H1 (cell line): ENCODE measurements at regions of chr6 and their contacts with region 1.

Region 1: DNA sequence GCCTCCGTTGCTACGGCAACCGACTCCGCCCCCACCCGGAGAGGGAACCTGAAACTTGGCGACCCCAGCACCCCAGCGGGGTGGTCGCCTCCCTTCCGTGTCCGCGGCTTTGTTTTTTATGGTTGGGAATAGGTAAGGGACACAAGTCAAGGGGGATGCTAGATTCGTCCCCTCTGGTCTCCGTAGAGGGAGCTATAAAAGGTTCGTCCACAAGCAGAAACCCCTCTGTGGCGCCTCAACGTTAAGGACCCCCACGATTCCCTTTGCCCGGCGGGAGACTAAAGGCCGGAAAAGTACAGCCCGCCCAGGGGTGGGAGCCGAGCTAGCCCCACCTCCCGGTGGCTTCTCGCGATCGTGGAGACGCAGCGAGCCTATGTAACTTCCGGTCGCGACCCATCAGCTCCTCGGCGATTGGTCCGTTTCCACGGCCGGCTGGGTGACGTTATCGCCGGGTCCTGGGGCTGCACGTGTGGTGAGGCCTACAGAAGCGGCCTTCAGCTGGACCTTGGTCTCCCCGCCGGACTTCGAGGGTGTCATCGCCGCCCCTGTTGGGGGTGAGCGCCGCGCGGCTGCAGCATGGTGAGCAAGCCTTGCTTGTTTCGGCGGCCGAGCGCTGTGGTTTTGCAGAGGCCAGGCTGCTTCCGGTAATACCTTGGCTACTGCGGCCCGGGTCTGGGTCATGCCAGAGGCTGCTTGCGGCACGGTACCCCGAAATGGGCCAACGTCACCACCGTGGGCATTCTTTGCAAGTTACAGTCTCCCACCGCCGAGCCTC is at the start of gene LTV1:
- DNase-seq: peak; percentile 88 to 96
- H3K4me3 ChIP-seq: peak within 1 kb of the TSS; percentile 80 to 97 (median 96)
- H3K27ac ChIP-seq: peak within 1 kb of the TSS; percentile 87
- H3K4me1 ChIP-seq: 0 out of 7 replicates have a peak, but pooled peaks cover 0 to 2% (median 0%) of the 10 kb centered on the region in 4 experiments
- H3K27me3 ChIP-seq: no peaks in the 10 kb centered on the region; a peak in 1 of 7 replicates
- CTCF ChIP-seq: no peak
- EP300 ChIP-seq: no peak; a peak in 1 of 3 replicates
- POLR2A ChIP-seq: peak in 1 of 2 experiments; percentile 90; a peak in 2 of 3 replicates
- RAD21 ChIP-seq: no peak; a peak in 1 of 4 replicates
- total RNA-seq, gene LTV1: 43.1 and 46.9 TPM in 2 replicates

Region 2: DNA sequence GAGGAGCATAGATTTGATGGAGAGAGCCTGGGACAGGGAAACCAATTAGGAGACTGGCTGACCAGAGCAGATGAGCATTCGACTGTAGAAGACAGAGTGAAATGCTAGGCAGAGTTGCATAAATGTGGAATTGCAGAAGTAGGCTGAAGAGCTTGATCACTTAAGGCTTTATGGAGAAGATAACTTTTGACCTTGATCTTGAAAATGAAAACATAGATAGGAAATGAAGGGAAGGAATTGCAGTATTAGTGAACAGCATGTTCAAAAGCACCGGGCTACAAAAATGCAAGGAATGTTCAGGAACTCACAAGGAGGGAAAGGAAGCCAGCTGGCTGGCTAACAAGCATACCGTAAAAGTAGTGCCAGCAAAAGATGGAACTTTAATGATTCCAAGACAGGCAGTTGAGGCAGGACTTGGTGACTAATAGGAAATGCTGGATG is 20.5 kb before region 1 on chr6:
- CTCF ChIA-PET with region 1: interaction called, 3 read pairs
- POLR2A ChIA-PET with region 1: interaction called, 12 read pairs
- DNase-seq: no peak
- H3K4me3 ChIP-seq: no peak overlapping the region
- H3K27ac ChIP-seq: no peak overlapping the region
- H3K4me1 ChIP-seq: no peaks in the 10 kb centered on the region
- H3K27me3 ChIP-seq: no peaks in the 10 kb centered on the region
- CTCF ChIP-seq: no peak
- EP300 ChIP-seq: no peak
- POLR2A ChIP-seq: no peak
- RAD21 ChIP-seq: no peak

Region 3: DNA sequence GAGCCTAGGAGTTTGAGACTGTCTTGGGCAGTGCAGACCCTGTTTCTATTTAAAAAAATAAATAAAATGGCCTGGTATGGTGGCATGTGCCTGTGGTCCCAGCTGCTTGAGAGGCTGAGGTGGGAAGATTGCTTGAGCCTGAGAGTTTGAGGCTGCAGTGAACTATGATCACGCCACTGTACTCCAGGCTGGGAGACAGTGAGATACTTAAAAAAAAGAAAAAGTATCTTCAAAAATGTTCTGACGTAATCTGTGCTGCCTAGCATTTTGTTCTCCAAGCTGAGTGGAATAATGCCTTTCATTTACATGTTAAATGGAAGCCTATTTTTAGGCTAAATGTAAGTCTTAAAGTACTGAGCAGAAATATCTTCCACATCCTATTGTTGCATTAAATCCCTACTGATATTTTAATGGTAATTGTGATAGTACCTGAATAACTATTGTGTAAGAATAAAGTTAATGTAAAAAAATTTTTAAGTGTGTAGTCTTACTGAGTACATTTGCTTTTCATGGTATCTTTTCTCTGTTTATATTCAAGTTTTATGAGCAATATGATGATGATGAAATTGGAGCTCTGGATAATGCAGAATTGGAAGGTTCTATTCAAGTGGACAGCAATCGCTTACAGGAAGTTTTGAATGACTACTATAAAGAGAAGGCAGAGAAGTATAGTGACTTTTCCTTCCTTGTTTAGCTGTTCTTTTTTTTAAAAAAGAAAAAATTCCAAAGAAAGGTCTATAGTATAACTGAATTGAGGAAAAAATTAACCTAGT is 17.0 kb after region 1 on chr6:
- CTCF ChIA-PET with region 1: interaction called, 5 read pairs
- POLR2A ChIA-PET with region 1: interaction called, 20 read pairs
- DNase-seq: no peak
- H3K4me3 ChIP-seq: no peak overlapping the region
- H3K27ac ChIP-seq: no peak overlapping the region
- H3K4me1 ChIP-seq: no peaks in the 10 kb centered on the region
- H3K27me3 ChIP-seq: no peaks in the 10 kb centered on the region
- CTCF ChIP-seq: no peak
- EP300 ChIP-seq: no peak
- POLR2A ChIP-seq: no peak
- RAD21 ChIP-seq: no peak

Region 4: GRCh38 chr6:143965503-143966171 is 122.5 kb after region 1 on chr6:
- CTCF ChIA-PET with region 1: no interaction called
- POLR2A ChIA-PET with region 1: no interaction called
- DNase-seq: no peak
- H3K4me3 ChIP-seq: no peak overlapping the region
- H3K27ac ChIP-seq: no peak overlapping the region
- H3K4me1 ChIP-seq: peaks cover 6 to 43% (median 31%) of the 10 kb centered on the region in 4 experiments; a peak in 6 of 7 replicates
- H3K27me3 ChIP-seq: peaks cover 82 to 100% (median 96%) of the 10 kb centered on the region in 4 experiments
- CTCF ChIP-seq: no peak
- EP300 ChIP-seq: no peak
- POLR2A ChIP-seq: no peak
- RAD21 ChIP-seq: no peak